GM18951 (cell line): ENCODE measurements at regions of chr17 and their contacts with region 1.

Region 1: DNA sequence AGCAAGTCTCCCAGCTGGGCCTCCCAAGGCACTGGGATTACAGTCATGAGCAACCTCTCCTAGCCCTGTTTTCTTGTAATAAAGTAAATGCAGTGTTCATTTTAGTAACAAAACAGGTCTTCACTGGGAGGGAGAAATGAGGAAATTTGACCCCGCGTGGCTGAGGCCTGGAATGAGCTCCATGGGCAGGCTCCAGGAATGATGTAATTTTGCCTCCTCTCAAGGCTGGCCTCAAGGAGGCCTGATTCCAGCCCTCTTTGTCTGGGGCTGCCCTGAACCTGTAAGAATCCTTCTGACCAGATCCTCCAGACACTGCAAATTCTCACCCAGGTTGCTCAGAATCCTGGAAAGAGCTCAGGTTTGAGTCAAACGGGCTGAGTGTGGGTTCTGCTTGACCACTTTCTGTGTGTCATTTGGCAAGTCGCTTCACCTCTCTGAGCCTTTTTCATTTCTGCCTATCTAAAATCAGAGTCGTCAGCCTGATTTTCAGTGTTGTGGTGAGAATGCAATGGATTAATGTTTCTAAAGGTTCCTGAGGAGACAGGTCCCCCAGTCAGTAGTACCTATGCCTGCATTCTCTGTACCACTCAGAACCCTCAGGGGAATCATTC is 57.1 kb downstream of the RAB11FIP4 start:
- POLR2A ChIP-seq: no peak

Region 2: GRCh38 chr17:31487648-31488263 is 39.2 kb after region 1 on chr17:
- in situ Hi-C with region 1: no loop called
- POLR2A ChIP-seq: peak; percentile 52

Region 3: GRCh38 chr17:31524926-31525800 is 76.6 kb after region 1 on chr17:
- in situ Hi-C with region 1: loop called (anchors 10 kb)
- POLR2A ChIP-seq: no peak